Endothelial cell of umbilical vein (primary cell): ENCODE measurements at regions of chr6 and their contacts with region 1.

Region 1: DNA sequence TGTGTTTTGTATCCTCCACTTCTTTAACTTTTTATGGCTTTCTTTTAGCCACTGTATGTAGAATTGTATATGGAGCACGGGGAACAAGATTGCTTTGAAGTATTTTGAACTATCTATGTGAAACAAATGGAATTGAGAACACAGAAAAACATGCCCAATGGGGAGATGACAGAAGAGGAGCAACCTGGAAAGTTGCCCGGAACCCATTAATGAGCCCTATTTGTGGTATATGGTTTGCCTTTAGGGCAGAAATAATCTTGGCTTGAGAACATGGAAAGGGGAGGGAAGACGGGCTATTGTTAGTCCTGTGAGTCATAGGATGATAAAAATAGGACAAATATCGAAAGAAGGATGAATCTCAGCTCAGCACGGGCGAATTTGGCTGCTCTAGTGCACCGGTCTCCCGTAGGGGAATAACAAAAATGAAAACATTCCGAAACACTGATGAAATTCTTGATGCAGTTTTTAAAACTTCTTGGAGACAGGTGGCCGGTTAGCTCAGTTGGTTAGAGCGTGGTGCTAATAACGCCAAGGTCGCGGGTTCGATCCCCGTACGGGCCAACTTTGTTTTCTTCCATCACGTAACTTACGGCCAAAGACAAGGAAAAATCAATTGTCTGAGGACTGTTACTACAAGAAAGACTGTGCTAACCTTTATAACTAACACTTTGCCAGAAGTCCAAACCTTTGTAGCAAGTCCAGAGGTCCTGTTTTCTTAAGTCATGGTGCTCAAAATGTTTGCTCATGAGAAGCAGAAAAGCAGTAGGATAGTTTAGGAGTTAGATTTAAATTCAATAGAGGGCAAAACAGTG is 15.7 kb downstream of the HMGN4 start:
- DNase-seq: peak; percentile 93
- H3K4me3 ChIP-seq: peak overlapping the region; percentile 29 to 94 (median 70)
- H3K27ac ChIP-seq: peak overlapping the region; percentile 71
- H3K4me1 ChIP-seq: peaks cover 13% of the 10 kb centered on the region
- H3K27me3 ChIP-seq: no peaks in the 10 kb centered on the region
- CTCF ChIP-seq: no peak
- POLR2A ChIP-seq: no peak

Region 2: GRCh38 chr6:26025894-26026832 is 527.7 kb before region 1 on chr6:
- CTCF ChIA-PET with region 1: no interaction called
- POLR2A ChIA-PET with region 1: no interaction called
- dilution Hi-C with region 1: no loop called
- intact Hi-C with region 1: loop called (anchors 10 kb)
- DNase-seq: peak; percentile 96
- H3K4me3 ChIP-seq: peak overlapping the region; percentile 1 to 59 (median 55)
- H3K27ac ChIP-seq: peak overlapping the region; percentile 95
- H3K4me1 ChIP-seq: peaks cover 18% of the 10 kb centered on the region
- H3K27me3 ChIP-seq: no peaks in the 10 kb centered on the region
- CTCF ChIP-seq: peak; percentile 89
- POLR2A ChIP-seq: no peak

Region 3: GRCh38 chr6:26258200-26258977 is 295.5 kb before region 1 on chr6:
- CTCF ChIA-PET with region 1: no interaction called
- POLR2A ChIA-PET with region 1: no interaction called
- dilution Hi-C with region 1: no loop called
- intact Hi-C with region 1: no loop called
- DNase-seq: no peak
- H3K4me3 ChIP-seq: no peak overlapping the region
- H3K27ac ChIP-seq: no peak overlapping the region
- H3K4me1 ChIP-seq: no peaks in the 10 kb centered on the region
- H3K27me3 ChIP-seq: peaks cover 12 to 13% of the 10 kb centered on the region in 2 experiments
- CTCF ChIP-seq: peak; percentile 13 to 17
- POLR2A ChIP-seq: no peak

Region 4: GRCh38 chr6:26312501-26313390 is 241.1 kb before region 1 on chr6:
- CTCF ChIA-PET with region 1: no interaction called
- POLR2A ChIA-PET with region 1: no interaction called
- dilution Hi-C with region 1: no loop called
- intact Hi-C with region 1: loop called (anchors 1 kb)
- DNase-seq: peak; percentile 83
- H3K4me3 ChIP-seq: peak overlapping the region; percentile 39 to 98 (median 95)
- H3K27ac ChIP-seq: peak overlapping the region; percentile 38
- H3K4me1 ChIP-seq: peaks cover 12% of the 10 kb centered on the region
- H3K27me3 ChIP-seq: peaks cover 4 to 9% of the 10 kb centered on the region in 2 experiments
- CTCF ChIP-seq: no peak
- POLR2A ChIP-seq: no peak

Region 5: GRCh38 chr6:26329763-26330511 is 223.9 kb before region 1 on chr6:
- CTCF ChIA-PET with region 1: interaction called, 3 read pairs
- POLR2A ChIA-PET with region 1: no interaction called
- dilution Hi-C with region 1: loop called (anchors 25 kb)
- intact Hi-C with region 1: loop called (anchors 1 kb)
- DNase-seq: peak; percentile 52
- H3K4me3 ChIP-seq: peak overlapping the region in 2 of 3 experiments; percentile 92 to 95
- H3K27ac ChIP-seq: no peak overlapping the region
- H3K4me1 ChIP-seq: peaks cover 23% of the 10 kb centered on the region
- H3K27me3 ChIP-seq: peaks cover 0 to 7% of the 10 kb centered on the region in 2 experiments
- CTCF ChIP-seq: no peak
- POLR2A ChIP-seq: no peak

Region 6: GRCh38 chr6:26411751-26412150 is 142.1 kb before region 1 on chr6:
- CTCF ChIA-PET with region 1: no interaction called
- POLR2A ChIA-PET with region 1: no interaction called
- dilution Hi-C with region 1: no loop called
- intact Hi-C with region 1: no loop called
- DNase-seq: no peak
- H3K4me3 ChIP-seq: no peak overlapping the region
- H3K27ac ChIP-seq: no peak overlapping the region
- H3K4me1 ChIP-seq: peaks cover 22% of the 10 kb centered on the region
- H3K27me3 ChIP-seq: no peaks in the 10 kb centered on the region
- CTCF ChIP-seq: no peak
- POLR2A ChIP-seq: no peak

Region 7: DNA sequence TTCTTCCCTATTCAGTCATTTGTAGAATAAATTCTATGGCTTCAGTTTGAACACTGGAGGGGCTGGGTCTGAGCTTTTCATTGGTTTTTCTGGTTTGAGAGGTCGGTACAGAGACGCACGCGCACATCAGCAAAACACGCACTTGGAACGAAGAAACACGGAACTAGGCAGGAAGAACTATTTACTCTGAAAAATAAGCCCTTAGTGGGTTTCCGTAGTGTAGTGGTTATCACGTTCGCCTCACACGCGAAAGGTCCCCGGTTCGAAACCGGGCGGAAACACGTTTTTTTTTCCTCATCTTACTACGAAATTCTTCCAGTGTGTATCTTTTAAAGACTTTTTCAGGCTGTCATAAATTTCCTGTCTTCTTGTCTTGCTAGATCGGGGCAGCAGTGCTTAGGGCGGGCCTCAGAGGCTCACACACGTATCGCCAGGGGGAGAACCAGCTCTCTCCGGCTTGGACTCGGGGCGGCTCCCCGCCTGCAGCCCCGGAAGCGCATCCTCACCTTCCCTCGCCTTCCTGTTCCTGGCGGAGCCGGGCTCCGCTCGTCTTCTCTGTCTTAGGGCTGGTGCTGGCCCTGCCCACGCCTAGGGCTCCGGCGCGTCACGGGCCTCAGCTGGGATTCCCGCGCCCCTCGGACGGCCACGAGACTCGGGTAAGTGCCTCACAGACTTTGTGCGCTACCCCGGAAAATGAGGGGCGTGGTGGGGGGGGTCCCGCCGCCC is 15.8 kb before region 1 on chr6 and contains the start of gene HMGN4:
- CTCF ChIA-PET with region 1: interaction called, 23 read pairs
- POLR2A ChIA-PET with region 1: interaction called, 4 read pairs
- dilution Hi-C with region 1: no loop called
- intact Hi-C with region 1: loop called (anchors 1 kb)
- DNase-seq: peak; percentile 93
- H3K4me3 ChIP-seq: peak within 1 kb of the TSS; percentile 87 to 99 (median 98)
- H3K27ac ChIP-seq: peak within 1 kb of the TSS; percentile 85
- H3K4me1 ChIP-seq: peaks cover 21% of the 10 kb centered on the region
- H3K27me3 ChIP-seq: no peaks in the 10 kb centered on the region
- CTCF ChIP-seq: no peak
- POLR2A ChIP-seq: no peak
- total RNA-seq, gene HMGN4: 33.7 and 36.9 TPM in 2 replicates